WTC11 (cell line): ENCODE measurements at regions of chr7 and their contacts with region 1.

Region 1: DNA sequence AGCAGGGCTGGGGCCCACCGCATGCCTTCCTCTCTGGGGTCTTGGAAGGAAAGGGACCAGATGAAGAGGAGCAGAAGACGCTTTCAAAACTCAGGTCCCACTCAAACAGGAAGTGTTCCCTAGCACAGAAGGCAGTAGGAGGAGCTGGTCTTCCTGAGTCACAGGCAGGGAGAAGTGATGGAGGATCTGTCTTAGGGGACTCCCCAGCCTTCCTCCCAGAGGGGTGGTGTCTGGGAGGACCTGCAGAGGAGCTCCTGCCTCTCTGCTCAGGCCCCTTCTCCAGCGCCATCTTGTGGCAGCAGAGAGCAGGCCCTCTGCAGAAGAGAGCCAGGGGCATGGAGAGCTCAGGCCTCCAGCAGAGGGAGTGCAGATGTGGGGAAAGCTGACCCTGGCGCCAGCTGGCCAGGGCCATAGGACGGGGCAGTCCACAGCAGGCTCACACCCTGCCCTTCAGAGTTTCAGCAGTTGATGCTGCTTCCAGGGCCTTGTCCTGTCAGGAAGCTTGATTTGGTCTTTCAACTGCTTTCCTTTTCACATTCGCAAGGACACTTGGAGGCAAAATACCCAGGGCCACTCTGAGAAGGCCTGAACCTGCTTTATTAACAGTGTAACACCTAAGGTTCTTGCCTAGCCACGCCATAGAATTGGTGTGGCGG is 62.2 kb upstream of the TARP start:
- DNase-seq: peak; percentile 94
- ATAC-seq: peak; percentile 78
- H3K4me3 Mint-ChIP-seq: no peak overlapping the region
- H3K27ac Mint-ChIP-seq: no peak overlapping the region
- H3K4me1 Mint-ChIP-seq: peaks cover 34% of the 10 kb centered on the region
- H3K27me3 Mint-ChIP-seq: no peaks in the 10 kb centered on the region
- CTCF ChIP-seq: peak; percentile 70

Region 2: DNA sequence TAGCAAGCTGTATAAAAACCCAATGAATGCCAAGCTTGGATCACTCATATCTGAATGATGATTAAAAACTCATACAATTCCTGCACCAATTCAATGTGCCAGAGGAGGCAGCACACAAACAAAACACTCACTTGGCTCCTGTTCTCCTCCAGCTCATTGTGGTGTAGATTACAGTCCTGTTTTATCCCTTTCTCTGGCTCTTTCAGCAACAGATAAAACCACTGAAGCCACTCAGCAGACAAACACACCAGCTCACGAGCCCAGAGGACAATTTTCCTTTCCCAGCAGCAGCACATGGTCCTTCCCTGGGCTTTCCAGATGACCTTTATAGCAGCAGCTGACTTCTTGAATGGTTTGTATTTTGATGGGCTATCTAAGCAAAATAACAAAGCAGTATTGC is 264.9 kb before region 1 on chr7:
- CTCF ChIA-PET with region 1: interaction called, 11 read pairs
- POLR2A ChIA-PET with region 1: no interaction called
- DNase-seq: peak; percentile 25
- ATAC-seq: peak; percentile 99
- H3K4me3 Mint-ChIP-seq: no peak overlapping the region
- H3K27ac Mint-ChIP-seq: peak overlapping the region; percentile 71
- H3K4me1 Mint-ChIP-seq: peaks cover 34% of the 10 kb centered on the region
- H3K27me3 Mint-ChIP-seq: no peaks in the 10 kb centered on the region
- CTCF ChIP-seq: 0 out of 2 replicates have a peak, but pooled peaks have one; percentile 22

Region 3: DNA sequence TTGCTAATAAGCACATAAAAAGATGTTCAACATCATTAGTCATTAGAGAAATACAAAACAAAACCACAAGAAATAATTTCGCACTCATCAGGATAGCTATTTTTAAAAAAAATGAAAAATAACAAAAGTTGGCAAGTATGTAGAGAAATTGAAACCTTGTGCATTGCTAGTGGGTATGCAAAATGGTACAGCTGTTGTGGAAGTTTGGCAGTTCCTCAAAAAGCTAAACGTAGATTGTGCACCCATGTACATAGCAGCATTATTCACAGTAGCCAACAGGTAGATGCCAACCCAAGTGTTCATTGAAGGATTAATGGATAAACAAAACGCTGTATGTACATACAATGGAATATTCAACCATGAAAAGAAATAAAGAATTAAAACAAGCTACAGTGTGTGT is 192.9 kb before region 1 on chr7:
- CTCF ChIA-PET with region 1: no interaction called
- POLR2A ChIA-PET with region 1: no interaction called
- DNase-seq: no peak
- ATAC-seq: no peak
- H3K4me3 Mint-ChIP-seq: no peak overlapping the region
- H3K27ac Mint-ChIP-seq: no peak overlapping the region
- H3K4me1 Mint-ChIP-seq: peaks cover 5% of the 10 kb centered on the region; the same call in 1 of the 2 replicates
- H3K27me3 Mint-ChIP-seq: no peaks in the 10 kb centered on the region
- CTCF ChIP-seq: no peak

Region 4: DNA sequence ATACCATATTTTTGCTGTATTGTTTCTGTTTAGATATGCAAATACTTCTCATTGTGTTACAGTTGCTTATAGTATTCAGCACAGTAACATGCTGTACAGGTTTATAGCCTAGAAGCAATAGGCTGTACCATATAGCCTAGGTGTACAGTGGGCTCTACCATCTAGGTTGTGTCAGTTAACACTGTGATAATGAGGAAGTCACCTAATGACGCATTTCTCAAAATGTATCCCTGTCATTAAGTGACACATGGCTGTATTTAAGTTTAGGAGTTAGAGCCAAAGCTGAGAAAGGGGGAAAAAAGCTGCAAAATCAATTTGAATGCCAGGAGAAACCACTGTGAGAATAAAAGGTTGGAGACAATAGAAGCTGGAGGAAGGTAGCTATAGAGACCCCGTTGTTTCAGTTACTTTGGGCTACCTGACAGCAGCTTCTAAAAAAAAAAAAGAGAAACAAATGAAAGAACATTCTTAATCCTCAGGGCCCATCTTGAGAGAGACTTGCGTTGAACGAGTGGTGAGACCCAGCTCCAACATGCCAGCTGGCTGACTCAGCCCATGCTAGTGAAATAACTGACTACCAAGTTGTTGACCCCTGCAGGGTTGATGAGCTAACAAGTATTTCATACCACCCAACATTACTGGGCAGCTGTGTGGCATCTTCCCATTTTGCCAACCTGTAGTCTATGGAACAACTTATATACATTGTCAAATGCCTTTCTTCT is 148.9 kb before region 1 on chr7:
- CTCF ChIA-PET with region 1: interaction called, 10 read pairs
- POLR2A ChIA-PET with region 1: no interaction called
- DNase-seq: no peak
- ATAC-seq: no peak
- H3K4me3 Mint-ChIP-seq: no peak overlapping the region
- H3K27ac Mint-ChIP-seq: no peak overlapping the region
- H3K4me1 Mint-ChIP-seq: peaks cover 46% of the 10 kb centered on the region
- H3K27me3 Mint-ChIP-seq: no peaks in the 10 kb centered on the region
- CTCF ChIP-seq: no peak

Region 5: DNA sequence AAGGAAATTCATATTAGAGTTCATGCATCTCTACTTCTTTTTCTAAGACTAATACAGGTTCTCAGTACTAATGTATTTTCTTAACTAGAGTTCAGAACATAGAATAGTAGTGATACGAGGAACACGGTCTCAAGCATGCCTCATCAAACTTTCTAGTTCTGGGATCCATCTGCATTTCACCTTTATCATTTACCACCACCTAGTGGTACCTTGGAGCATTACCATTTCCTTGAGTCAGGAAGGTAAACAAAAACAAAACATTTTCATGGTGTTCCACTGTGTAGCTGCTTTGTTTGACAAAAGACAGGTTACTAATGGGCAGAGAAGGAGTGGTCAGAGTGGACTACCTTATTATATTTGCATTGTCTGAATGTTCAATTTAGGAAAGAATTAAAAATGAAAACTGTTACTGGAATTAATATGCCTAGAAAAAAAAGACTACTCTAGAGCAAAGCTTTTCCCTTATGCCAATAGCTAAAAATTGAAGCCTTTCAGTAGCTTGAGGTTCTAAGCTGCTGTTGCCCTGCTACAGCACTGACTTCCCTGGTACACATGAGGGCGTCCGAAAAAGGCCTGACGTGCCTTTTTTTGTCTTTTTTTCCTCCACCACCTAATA is 113.0 kb before region 1 on chr7:
- CTCF ChIA-PET with region 1: interaction called, 25 read pairs
- POLR2A ChIA-PET with region 1: no interaction called
- DNase-seq: no peak
- ATAC-seq: peak; percentile 78
- H3K4me3 Mint-ChIP-seq: no peak overlapping the region
- H3K27ac Mint-ChIP-seq: no peak overlapping the region
- H3K4me1 Mint-ChIP-seq: no peaks in the 10 kb centered on the region
- H3K27me3 Mint-ChIP-seq: no peaks in the 10 kb centered on the region
- CTCF ChIP-seq: peak; percentile 63

Region 6: GRCh38 chr7:38318803-38319416 is 16.7 kb before region 1 on chr7:
- CTCF ChIA-PET with region 1: interaction called, 80 read pairs
- POLR2A ChIA-PET with region 1: interaction called, 4 read pairs
- DNase-seq: peak; percentile 49
- ATAC-seq: peak; percentile 97
- H3K4me3 Mint-ChIP-seq: no peak overlapping the region
- H3K27ac Mint-ChIP-seq: peak overlapping the region; percentile 48
- H3K4me1 Mint-ChIP-seq: peaks cover 26% of the 10 kb centered on the region
- H3K27me3 Mint-ChIP-seq: no peaks in the 10 kb centered on the region; the same call in 1 of the 2 replicates
- CTCF ChIP-seq: no peak